Activated B cell treated with CpG ODN at 0.5 μM for 24 hours (primary cell): ENCODE measurements at regions of chr1 and their contacts with region 1.

Region 1: DNA sequence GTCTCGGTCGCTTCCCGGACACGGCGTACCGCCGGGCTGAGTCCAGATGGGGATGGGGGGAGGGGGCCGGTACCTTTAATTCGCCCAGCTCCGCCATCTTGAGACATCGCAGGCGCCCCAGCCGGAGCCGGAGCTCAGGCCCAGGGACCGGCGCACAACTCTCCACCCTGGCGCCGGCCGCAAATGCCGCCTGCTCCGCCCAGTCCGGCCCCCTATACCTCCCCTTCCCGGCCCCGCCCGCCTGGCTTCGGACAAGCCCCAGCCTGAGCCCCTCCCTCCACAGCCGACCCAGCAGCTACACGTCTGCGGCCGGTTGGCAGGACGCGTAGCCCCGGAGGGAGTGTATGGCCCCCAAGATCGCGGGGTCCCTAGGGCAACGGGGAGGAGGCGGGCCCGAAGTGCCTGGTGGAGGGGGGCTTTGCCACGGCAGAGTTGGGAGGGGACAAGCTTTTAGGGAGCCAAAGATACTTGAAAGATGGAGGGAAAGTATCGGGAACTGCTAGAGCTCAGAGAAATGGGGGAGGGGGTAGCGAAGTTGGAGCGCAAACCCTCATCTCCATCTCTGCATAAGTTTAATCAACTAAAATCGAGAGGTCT is at the start of gene PIAS3:
- DNase-seq: peak; percentile 91
- ATAC-seq: peak; percentile 86
- H3K4me3 Mint-ChIP-seq: peak within 1 kb of the TSS; percentile 96
- H3K27ac Mint-ChIP-seq: peak within 1 kb of the TSS; percentile 92
- H3K4me1 Mint-ChIP-seq: peaks cover 14% of the 10 kb centered on the region
- H3K27me3 Mint-ChIP-seq: peaks cover 2% of the 10 kb centered on the region
- CTCF ChIP-seq: no peak
- total RNA-seq, gene PIAS3: 29.0 and 30.9 TPM in 2 replicates

Region 2: GRCh38 chr1:145805057-145805456 is 53.9 kb before region 1 on chr1:
- CTCF ChIA-PET with region 1: no interaction called
- POLR2A ChIA-PET with region 1: no interaction called
- intact Hi-C with region 1: no loop called
- DNase-seq: no peak
- ATAC-seq: no peak
- H3K4me3 Mint-ChIP-seq: no peak overlapping the region
- H3K27ac Mint-ChIP-seq: no peak overlapping the region
- H3K4me1 Mint-ChIP-seq: peaks cover 37% of the 10 kb centered on the region
- H3K27me3 Mint-ChIP-seq: no peaks in the 10 kb centered on the region
- CTCF ChIP-seq: no peak

Region 3: GRCh38 chr1:145871994-145872924 is 13.3 kb after region 1 on chr1:
- CTCF ChIA-PET with region 1: interaction called, 8 read pairs
- POLR2A ChIA-PET with region 1: interaction called, 26 read pairs
- intact Hi-C with region 1: loop called (anchors 1 kb)
- DNase-seq: peak; percentile 45
- ATAC-seq: peak; percentile 81
- H3K4me3 Mint-ChIP-seq: peak overlapping the region; percentile 83
- H3K27ac Mint-ChIP-seq: no peak overlapping the region
- H3K4me1 Mint-ChIP-seq: peaks cover 11% of the 10 kb centered on the region
- H3K27me3 Mint-ChIP-seq: peaks cover 28% of the 10 kb centered on the region
- CTCF ChIP-seq: no peak

Region 4: DNA sequence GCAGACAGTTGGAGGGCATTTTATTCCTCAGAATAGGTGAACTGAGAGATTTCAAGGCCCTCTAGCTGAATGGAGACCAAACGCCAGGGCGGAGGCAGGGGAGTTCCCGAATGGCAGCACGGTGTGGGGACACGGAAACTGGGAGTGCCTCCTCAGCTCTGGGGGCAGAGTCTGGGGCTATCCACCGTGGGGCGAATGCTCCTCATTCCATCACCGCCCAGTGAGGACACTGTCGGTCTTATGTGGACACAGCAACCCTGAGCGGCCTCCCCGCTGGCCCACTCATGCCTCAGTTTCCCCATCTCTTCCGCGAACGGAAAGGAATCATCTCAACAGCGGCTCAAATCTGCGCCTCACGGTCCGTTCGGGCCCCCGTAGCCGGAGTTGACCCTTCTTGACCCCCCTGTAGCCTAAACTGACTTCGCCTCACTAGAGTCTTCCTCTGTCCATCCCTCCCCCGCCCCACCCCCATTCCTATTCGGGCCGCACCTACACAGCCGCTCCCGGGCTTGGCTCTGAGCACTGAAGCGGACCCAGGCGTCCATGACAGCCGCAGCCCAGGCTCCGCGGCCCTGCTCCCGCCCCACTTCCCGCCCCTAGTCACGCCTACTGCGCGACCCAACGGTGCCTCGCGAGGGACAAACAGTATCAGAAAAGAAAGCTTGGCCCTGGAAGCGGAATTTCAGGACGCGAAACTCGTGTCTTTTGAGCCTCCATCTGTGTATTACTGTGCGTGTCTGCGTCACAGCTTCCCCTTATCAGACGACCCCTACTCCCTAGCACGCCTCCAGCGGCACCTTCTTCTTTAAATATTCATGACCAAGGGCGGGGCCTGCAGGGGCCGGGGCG is 59.4 kb after region 1 on chr1 and contains the start of gene PEX11B:
- CTCF ChIA-PET with region 1: interaction called, 3 read pairs
- POLR2A ChIA-PET with region 1: interaction called, 95 read pairs
- intact Hi-C with region 1: loop called (anchors 1 kb)
- DNase-seq: peak; percentile 88
- ATAC-seq: peak; percentile 90
- H3K4me3 Mint-ChIP-seq: peak within 1 kb of the TSS; percentile 95
- H3K27ac Mint-ChIP-seq: peak within 1 kb of the TSS; percentile 93
- H3K4me1 Mint-ChIP-seq: peaks cover 35% of the 10 kb centered on the region
- H3K27me3 Mint-ChIP-seq: no peaks in the 10 kb centered on the region
- CTCF ChIP-seq: no peak
- total RNA-seq, gene PEX11B: 42.7 and 47.7 TPM in 2 replicates

Region 5: GRCh38 chr1:145963995-145964901 is 105.3 kb after region 1 on chr1 and contains the starts of genes ANKRD34A and POLR3GL:
- CTCF ChIA-PET with region 1: no interaction called
- POLR2A ChIA-PET with region 1: interaction called, 41 read pairs
- intact Hi-C with region 1: loop called (anchors 1 kb)
- DNase-seq: peak; percentile 78
- ATAC-seq: peak; percentile 88
- H3K4me3 Mint-ChIP-seq: peak within 1 kb of the TSS; percentile 97
- H3K27ac Mint-ChIP-seq: peak within 1 kb of the TSS; percentile 96
- H3K4me1 Mint-ChIP-seq: peaks cover 52% of the 10 kb centered on the region
- H3K27me3 Mint-ChIP-seq: no peaks in the 10 kb centered on the region
- CTCF ChIP-seq: no peak
- total RNA-seq, gene ANKRD34A: 1.4 and 2.4 TPM in 2 replicates
- total RNA-seq, gene POLR3GL: 22.7 and 23.7 TPM in 2 replicates

Region 6: DNA sequence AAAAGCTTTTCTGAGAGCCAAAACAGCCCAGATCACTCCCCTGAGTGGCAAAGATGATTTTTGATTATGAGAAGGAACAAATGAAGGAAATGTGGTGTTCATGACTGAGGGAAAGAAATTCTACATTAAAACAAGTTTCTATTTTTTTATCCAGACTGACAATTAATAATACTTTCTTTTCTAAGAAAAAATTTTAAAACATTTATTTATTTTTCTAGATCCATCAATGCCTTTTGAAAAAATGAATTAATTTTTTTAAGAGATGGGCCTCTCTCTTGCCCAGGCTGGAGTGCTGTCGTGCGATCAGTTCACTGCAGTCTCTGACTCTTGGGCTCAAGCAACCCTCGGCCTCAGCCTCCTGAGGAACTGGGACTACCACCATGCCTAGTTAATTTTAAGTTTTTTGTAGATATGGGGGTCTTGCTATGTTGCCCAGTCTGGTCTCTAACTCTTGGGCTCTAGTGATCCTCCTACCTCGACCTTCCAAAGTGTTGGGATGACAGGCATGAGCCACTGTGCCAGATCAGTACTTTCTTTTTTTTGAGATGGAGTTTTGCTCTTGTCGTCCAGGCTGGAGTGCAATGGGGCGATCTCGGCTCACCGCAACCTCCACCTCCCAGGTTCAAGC is 148.6 kb after region 1 on chr1:
- CTCF ChIA-PET with region 1: no interaction called
- POLR2A ChIA-PET with region 1: interaction called, 10 read pairs
- intact Hi-C with region 1: loop called (anchors 1 kb)
- DNase-seq: no peak
- ATAC-seq: no peak
- H3K4me3 Mint-ChIP-seq: no peak overlapping the region
- H3K27ac Mint-ChIP-seq: peak overlapping the region; percentile 96
- H3K4me1 Mint-ChIP-seq: peaks cover 26% of the 10 kb centered on the region
- H3K27me3 Mint-ChIP-seq: no peaks in the 10 kb centered on the region
- CTCF ChIP-seq: no peak